ENCODE measurements at regions of chr17 and their contacts with region 1.

Region 1: DNA sequence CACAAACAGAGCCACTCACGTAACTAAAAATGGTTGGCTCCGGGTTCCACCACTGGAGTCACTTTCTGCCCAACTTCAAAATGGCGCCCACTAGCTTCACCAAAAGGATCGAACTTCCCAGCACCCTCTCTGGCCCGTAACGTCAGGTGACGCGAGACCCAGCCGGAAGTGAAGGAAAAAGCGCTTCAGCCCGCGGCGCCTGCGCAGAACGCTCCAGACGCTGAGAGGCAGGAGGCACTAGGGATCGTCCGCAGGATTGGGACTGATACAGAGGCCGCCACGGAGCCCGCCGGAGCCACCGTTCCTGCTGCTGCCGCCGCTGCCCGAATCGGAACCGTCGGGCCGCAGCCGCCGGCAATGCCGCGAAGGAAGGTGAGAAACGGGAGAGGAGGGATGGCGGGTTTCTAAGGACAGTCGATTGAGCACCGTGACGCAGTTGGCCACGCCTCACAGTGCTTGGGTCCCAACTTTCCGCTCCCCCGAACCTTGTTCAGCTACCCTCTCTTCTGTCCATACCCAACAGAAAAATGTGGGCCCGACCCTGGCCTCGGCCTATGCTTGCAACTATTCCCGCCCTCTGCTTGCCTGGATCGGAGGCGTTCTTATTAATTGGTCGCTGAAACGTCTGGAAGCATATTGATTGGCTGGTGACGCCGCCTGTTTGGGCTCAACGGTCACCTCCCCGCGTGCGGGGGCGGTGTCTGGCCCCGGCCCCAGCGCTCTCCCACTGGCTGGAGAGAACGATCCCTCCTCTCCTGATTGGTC is at the start of gene KAT7:
- DNase-seq: peak; percentile 99
- H3K4me3 Mint-ChIP-seq: peak within 1 kb of the TSS; percentile 94
- H3K27ac Mint-ChIP-seq: peak within 1 kb of the TSS; percentile 97
- H3K4me1 Mint-ChIP-seq: peaks cover 56% of the 10 kb centered on the region
- H3K27me3 Mint-ChIP-seq: peaks cover 2% of the 10 kb centered on the region
- total RNA-seq, gene KAT7: 79.8 to 80.2 TPM

Region 2: DNA sequence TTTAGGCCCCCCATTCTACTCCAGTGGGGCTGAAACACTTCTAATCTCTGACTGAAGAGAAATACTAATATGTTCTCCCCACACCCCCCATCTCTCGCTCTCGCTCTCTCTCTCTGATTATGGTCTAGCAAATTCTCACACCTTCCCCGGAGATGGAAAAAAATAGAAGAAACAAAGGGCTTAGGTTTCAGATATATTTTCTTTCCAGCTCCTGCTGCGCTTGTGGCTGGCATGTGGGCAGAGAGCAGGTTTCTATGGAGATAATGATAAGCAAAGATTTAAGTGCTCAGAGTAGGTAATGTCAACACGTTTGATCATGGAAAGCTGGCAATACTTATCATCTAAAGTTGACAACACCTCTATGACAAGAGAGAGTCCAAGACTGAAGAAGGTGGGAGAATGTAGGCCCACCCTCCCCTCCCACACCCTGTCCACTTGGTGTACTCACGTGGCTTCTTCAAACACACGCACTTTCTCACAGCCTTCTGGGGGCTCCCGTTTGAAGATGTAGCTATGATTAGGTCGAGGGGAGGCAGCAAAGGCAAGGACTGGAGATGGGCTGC is 72.9 kb before region 1 on chr17:
- CTCF ChIA-PET with region 1: interaction called, 5 read pairs
- POLR2A ChIA-PET with region 1: interaction called, 82 read pairs
- DNase-seq: peak; percentile 49
- H3K4me3 Mint-ChIP-seq: peak overlapping the region; percentile 26
- H3K27ac Mint-ChIP-seq: peak overlapping the region; percentile 90
- H3K4me1 Mint-ChIP-seq: peaks cover 53% of the 10 kb centered on the region
- H3K27me3 Mint-ChIP-seq: no peaks in the 10 kb centered on the region

Region 3: DNA sequence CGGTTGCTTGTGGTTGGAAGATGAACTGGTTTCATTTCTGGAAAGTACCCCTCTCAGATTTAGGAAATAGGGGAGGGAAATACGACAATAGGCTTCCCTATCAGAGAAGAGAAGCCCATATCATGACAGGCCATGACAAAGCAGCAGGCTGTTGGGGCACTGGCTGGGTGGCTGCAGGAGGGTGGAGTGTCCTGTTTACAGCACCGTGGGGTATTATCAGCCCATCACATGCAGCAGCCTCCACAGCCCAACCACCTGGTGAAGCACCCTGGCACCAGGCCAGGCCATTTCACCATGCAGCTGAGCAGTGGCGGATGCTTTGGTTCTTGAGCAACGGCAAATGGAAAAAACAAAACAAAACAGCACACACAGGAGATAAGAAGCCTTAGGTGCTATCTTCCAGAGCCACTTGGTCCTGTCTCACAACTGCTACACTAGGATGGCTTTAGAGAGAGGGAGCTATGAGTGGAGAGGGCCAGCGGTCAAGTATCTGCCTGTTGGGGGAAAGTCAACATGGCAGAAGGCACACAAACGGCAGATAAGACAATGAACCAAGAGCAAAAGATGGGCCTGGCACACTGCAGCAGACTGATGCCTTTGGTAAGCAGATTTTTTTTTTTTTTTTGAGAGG is 48.9 kb before region 1 on chr17:
- CTCF ChIA-PET with region 1: interaction called, 3 read pairs
- POLR2A ChIA-PET with region 1: interaction called, 63 read pairs
- DNase-seq: peak; percentile 95
- H3K4me3 Mint-ChIP-seq: peak overlapping the region; percentile 94
- H3K27ac Mint-ChIP-seq: peak overlapping the region; percentile 100
- H3K4me1 Mint-ChIP-seq: peaks cover 77% of the 10 kb centered on the region
- H3K27me3 Mint-ChIP-seq: no peaks in the 10 kb centered on the region

Region 4: DNA sequence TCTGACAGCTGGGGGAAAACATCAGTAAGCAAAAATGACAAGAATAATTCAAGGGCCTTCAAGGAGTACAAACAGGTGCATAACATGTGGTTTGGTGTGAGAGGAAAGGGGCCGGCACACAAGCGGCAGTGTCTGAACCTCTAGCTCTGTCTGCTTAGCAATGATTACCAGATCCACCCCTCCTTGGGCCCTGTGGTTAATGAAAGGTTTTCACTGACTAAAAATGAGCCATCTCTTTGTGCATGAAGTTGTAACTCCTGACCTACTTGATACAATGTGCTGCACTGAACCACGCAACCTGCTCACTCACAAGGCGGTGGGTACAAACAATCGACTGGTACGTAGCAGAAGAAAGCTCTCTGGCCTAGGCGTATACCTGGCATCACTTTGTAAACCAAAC is 39.9 kb before region 1 on chr17:
- CTCF ChIA-PET with region 1: interaction called, 5 read pairs
- POLR2A ChIA-PET with region 1: interaction called, 64 read pairs
- DNase-seq: peak; percentile 74
- H3K4me3 Mint-ChIP-seq: peak overlapping the region; percentile 51
- H3K27ac Mint-ChIP-seq: peak overlapping the region; percentile 94
- H3K4me1 Mint-ChIP-seq: peaks cover 82% of the 10 kb centered on the region
- H3K27me3 Mint-ChIP-seq: no peaks in the 10 kb centered on the region

Region 5: GRCh38 chr17:49763735-49764558 is 24.7 kb before region 1 on chr17 and contains the start of gene FAM117A:
- CTCF ChIA-PET with region 1: interaction called, 5 read pairs
- POLR2A ChIA-PET with region 1: interaction called, 51 read pairs
- DNase-seq: peak; percentile 99
- H3K4me3 Mint-ChIP-seq: peak within 1 kb of the TSS; percentile 93
- H3K27ac Mint-ChIP-seq: peak within 1 kb of the TSS; percentile 78
- H3K4me1 Mint-ChIP-seq: peaks cover 54% of the 10 kb centered on the region
- H3K27me3 Mint-ChIP-seq: peaks cover 31% of the 10 kb centered on the region
- total RNA-seq, gene FAM117A: 61.0 to 62.0 TPM

Region 6: DNA sequence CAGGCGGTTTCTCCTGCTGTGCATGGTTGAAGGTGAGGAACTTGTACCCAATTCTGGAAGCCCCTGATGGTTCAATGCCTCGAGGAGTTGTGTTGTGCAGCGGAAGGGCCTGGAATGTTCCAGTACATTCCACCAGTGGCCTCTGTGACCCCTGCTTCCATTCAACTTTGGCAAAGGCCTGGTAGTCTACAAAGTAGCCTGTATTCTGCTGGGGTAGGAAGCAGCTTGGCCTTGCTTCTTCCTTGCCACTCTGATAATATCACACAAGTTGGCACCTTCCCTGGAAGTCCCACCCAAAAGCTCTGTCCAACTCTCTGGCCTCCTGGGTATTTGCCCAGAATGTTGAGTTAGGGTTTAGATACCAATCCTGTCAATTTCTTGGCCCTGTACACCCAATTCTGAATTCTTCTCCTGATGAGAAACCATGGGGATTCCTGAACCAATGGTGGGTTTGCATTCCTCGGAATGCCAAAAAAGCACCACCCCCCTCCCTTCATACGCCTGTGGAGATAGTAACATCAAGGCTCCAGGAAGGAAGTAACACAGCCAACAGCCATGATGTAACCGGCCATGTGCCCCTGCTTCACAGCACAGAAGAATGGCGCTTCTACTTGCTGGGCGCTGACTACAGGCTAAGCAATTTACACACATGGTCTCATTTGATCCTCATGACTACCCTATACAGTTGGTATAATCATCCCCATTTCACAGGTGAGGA is 13.0 kb before region 1 on chr17:
- CTCF ChIA-PET with region 1: interaction called, 9 read pairs
- POLR2A ChIA-PET with region 1: interaction called, 16 read pairs
- DNase-seq: no peak
- H3K4me3 Mint-ChIP-seq: no peak overlapping the region
- H3K27ac Mint-ChIP-seq: no peak overlapping the region
- H3K4me1 Mint-ChIP-seq: peaks cover 11% of the 10 kb centered on the region
- H3K27me3 Mint-ChIP-seq: no peaks in the 10 kb centered on the region

Region 7: DNA sequence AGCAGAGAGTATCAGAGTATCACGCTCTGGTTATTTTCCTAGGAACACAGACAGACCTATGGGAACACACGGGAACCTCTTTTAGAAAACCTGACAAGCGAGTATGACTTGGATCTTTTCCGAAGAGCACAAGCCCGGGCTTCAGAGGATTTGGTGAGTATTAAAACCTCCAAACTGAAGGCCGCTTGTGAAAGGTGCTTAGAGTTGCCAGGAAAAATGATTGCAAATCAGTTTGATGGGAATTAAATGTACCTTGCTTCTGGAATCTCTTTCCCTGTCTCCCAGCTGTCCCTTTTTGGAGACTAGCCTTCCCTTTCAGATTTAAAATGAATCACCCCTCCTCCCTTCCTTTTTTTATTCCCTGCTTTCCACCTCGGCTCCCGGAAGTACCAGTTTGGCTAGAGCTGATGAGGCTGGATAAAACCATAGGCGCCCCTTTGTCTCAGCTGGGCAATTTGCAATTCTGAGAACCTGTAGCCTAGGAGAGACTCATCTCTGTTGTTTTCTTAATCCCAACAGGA is 27.2 kb after region 1 on chr17:
- CTCF ChIA-PET with region 1: interaction called, 3 read pairs
- POLR2A ChIA-PET with region 1: interaction called, 24 read pairs
- DNase-seq: no peak
- H3K4me3 Mint-ChIP-seq: no peak overlapping the region
- H3K27ac Mint-ChIP-seq: peak overlapping the region; percentile 58
- H3K4me1 Mint-ChIP-seq: peaks cover 69% of the 10 kb centered on the region
- H3K27me3 Mint-ChIP-seq: no peaks in the 10 kb centered on the region

Region 8: GRCh38 chr17:49887086-49888028 is 98.7 kb after region 1 on chr17:
- CTCF ChIA-PET with region 1: no interaction called
- POLR2A ChIA-PET with region 1: no interaction called
- DNase-seq: no peak
- H3K4me3 Mint-ChIP-seq: no peak overlapping the region
- H3K27ac Mint-ChIP-seq: no peak overlapping the region
- H3K4me1 Mint-ChIP-seq: no peaks in the 10 kb centered on the region
- H3K27me3 Mint-ChIP-seq: peaks cover 34% of the 10 kb centered on the region

Region 9: DNA sequence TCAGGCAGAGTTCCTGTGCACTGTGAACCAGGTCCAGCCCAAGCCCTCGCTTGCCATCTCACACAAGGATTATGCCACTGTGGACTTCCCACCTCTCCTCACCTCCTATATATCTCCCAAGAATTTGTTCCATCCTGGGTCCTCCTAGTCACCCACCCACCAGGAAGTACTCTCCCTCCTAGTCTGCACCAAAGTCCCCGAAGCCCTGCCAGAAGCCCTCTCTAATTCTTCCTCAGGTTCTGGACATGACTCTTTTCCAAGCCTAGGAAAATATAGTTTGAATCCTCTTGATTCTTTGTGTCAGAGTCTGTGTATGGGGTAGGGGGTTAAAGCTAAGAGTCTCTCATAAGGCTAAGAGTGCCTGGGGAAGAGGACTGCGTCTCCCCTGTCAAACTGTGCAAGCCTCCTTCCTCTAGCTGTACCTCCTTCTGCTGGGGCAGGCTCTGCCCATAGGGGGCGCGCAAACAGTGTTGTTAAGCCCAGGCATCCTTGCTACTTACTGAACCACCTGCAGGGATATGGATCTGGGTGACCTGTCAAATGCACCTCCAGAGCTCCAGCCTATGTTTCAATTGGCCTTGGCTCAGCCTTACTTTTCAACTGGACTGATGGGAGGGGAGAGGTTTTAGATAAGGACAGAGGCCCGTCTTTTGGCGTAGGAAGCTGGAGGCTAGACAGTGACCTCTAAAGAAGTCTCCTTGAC is 163.7 kb after region 1 on chr17:
- CTCF ChIA-PET with region 1: no interaction called
- POLR2A ChIA-PET with region 1: no interaction called
- DNase-seq: peak; percentile 83
- H3K4me3 Mint-ChIP-seq: no peak overlapping the region
- H3K27ac Mint-ChIP-seq: no peak overlapping the region
- H3K4me1 Mint-ChIP-seq: no peaks in the 10 kb centered on the region
- H3K27me3 Mint-ChIP-seq: peaks cover 41% of the 10 kb centered on the region